H1 (cell line): ENCODE measurements at regions of chr2 and their contacts with region 1.

Region 1: DNA sequence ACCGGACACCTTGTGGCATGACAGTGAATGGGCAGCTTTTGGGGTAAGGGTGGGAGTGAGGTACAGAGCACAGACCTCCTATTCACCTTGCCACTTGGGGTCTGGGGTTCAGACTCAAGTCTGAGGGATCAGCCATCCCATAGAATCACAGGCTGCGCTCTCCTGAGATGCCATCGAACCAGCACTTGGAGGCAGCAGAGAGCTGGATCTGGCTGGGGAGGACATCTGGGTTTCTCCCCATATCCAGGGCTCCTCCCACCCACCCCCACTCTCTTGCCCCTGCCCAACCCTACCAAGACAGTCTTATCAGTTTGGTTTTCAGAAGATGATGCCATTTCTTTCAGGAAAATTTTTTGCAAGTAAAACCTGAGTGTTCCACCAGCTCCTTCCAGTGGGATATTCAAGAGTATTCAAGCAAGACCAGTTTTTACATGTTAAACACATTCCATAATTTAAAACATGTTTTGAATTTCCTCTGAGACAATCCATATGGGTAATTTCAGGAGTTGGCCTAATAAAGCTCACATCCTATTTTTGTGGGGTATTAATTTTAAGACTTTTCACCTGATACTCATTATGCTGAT is 29.2 kb upstream of the TEX44 start:
- DNase-seq: peak; percentile 73 to 78
- H3K4me3 ChIP-seq: no peak overlapping the region
- H3K27ac ChIP-seq: no peak overlapping the region
- H3K4me1 ChIP-seq: peaks cover 0 to 5% (median 3%) of the 10 kb centered on the region in 4 experiments; a peak in 5 of 7 replicates
- H3K27me3 ChIP-seq: no peaks in the 10 kb centered on the region
- CTCF ChIP-seq: peak; percentile 90 to 95 (median 93)
- EP300 ChIP-seq: no peak
- POLR2A ChIP-seq: no peak
- RAD21 ChIP-seq: peak; percentile 92

Region 2: GRCh38 chr2:231370749-231371429 is 192.6 kb before region 1 on chr2:
- CTCF ChIA-PET with region 1: no interaction called
- POLR2A ChIA-PET with region 1: no interaction called
- DNase-seq: peak in 1 of 2 experiments; percentile 80
- H3K4me3 ChIP-seq: peak overlapping the region in 1 of 4 experiments; percentile 42; a peak in 2 of 8 replicates
- H3K27ac ChIP-seq: peak overlapping the region; percentile 86
- H3K4me1 ChIP-seq: peaks cover 0 to 33% (median 26%) of the 10 kb centered on the region in 4 experiments; a peak in 6 of 7 replicates
- H3K27me3 ChIP-seq: no peaks in the 10 kb centered on the region; a peak in 2 of 7 replicates
- CTCF ChIP-seq: no peak
- EP300 ChIP-seq: peak in 1 of 2 experiments; percentile 53; a peak in 1 of 3 replicates
- POLR2A ChIP-seq: peak in 1 of 2 experiments; percentile 68; a peak in 1 of 3 replicates
- RAD21 ChIP-seq: no peak

Region 3: GRCh38 chr2:231541645-231542044 is 21.8 kb before region 1 on chr2:
- CTCF ChIA-PET with region 1: interaction called, 24 read pairs
- POLR2A ChIA-PET with region 1: interaction called, 4 read pairs
- DNase-seq: peak in 1 of 2 experiments; percentile 90
- H3K4me3 ChIP-seq: no peak overlapping the region
- H3K27ac ChIP-seq: no peak overlapping the region
- H3K4me1 ChIP-seq: 0 out of 7 replicates have a peak, but pooled peaks cover 0 to 2% (median 0%) of the 10 kb centered on the region in 4 experiments
- H3K27me3 ChIP-seq: no peaks in the 10 kb centered on the region
- CTCF ChIP-seq: peak; percentile 93 to 98 (median 93)
- EP300 ChIP-seq: no peak
- POLR2A ChIP-seq: no peak
- RAD21 ChIP-seq: peak; percentile 54 to 70; a peak in 3 of 4 replicates

Region 4: DNA sequence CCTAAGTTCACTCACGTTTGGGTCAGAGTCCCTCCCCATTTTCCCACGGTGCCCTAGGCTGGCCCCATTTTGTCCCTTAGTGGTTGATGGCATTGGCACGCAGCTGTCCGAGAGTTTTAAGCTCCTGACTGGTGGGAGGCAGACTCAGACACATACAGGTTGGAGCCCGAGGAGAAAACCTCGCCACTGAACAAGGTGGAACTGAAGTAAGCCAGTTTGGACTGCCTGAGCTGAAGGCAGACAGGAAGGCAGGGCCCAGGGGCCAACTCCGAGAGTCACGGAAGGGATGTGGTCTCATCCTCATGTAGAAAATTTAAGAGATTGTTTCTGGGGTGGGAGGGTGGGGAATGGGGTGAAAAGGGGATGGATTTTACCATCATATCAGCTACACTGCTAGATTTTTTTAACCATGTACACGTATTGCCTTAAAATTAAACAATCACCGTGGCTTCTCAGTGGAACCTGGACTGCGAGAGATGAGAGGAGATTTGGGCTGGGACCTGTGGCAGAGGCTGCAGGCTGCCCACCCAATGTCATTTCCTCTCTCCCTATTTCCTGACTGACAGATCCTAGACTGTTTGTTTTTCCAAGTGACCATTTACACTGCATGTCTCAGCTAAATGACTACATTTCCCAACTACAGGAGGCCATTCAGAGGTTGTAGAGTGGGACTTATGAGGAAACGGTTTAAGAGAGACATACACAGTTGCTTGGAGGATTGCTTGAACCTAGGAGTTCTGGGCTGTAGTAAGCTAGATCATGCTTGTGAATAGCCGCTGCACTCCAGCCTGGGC is 13.8 kb before region 1 on chr2:
- CTCF ChIA-PET with region 1: interaction called, 26 read pairs
- POLR2A ChIA-PET with region 1: no interaction called
- DNase-seq: no peak
- H3K4me3 ChIP-seq: no peak overlapping the region
- H3K27ac ChIP-seq: no peak overlapping the region
- H3K4me1 ChIP-seq: no peaks in the 10 kb centered on the region
- H3K27me3 ChIP-seq: no peaks in the 10 kb centered on the region
- CTCF ChIP-seq: no peak
- EP300 ChIP-seq: no peak
- POLR2A ChIP-seq: no peak
- RAD21 ChIP-seq: no peak